ENCODE measurements at regions of chr10 and their contacts with region 1.

Region 1: GRCh38 chr10:99845837-99846382 is 63.5 kb downstream of the ABCC2 start:
- DNase-seq: peak; percentile 67 to 74 (median 71)
- H3K4me3 ChIP-seq: no peak overlapping the region
- H3K4me3 Mint-ChIP-seq: peak overlapping the region in 7 of 8 donors; percentile 10 to 70 (median 39)
- H3K27ac ChIP-seq: no peak overlapping the region
- H3K27ac Mint-ChIP-seq: no peak overlapping the region
- H3K4me1 ChIP-seq: peaks cover 4% of the 10 kb centered on the region
- H3K4me1 Mint-ChIP-seq: peaks cover 4 to 7% (median 5%) of the 10 kb centered on the region in 4 donors
- H3K27me3 ChIP-seq: no peaks in the 10 kb centered on the region
- H3K27me3 Mint-ChIP-seq: no peaks in the 10 kb centered on the region

Region 2: DNA sequence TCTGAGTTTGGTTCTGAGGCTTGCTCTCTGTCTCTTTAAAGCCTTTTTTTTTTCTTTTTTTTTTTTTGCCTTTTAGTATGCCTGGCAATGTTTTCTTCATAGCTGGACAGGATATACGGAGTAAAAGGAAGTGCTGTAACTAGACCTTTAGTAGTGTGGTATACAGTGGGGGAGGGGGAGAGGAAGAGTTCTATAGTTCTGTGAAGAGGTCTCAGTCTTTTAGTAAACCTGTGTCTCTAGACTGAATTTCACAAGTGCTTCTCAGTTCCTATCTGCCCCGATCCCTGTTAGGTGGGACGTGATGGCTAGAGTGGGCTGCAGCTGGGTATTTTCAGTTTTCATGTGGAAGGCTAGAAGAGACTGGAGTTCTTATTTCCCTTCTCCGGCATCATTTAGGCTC is 66.6 kb before region 1 on chr10:
- CTCF ChIA-PET with region 1: no interaction called
- POLR2A ChIA-PET with region 1: no interaction called
- intact Hi-C with region 1: no loop called
- DNase-seq: no peak
- H3K4me3 ChIP-seq: no peak overlapping the region
- H3K4me3 Mint-ChIP-seq: no peak overlapping the region
- H3K27ac ChIP-seq: no peak overlapping the region
- H3K27ac Mint-ChIP-seq: no peak overlapping the region
- H3K4me1 ChIP-seq: no peaks in the 10 kb centered on the region
- H3K4me1 Mint-ChIP-seq: no peaks in the 10 kb centered on the region
- H3K27me3 ChIP-seq: no peaks in the 10 kb centered on the region
- H3K27me3 Mint-ChIP-seq: peaks cover 0 to 5% of the 10 kb centered on the region in 2 donors

Region 3: GRCh38 chr10:99827936-99828335 is 18.0 kb before region 1 on chr10:
- CTCF ChIA-PET with region 1: interaction called, 10 read pairs
- POLR2A ChIA-PET with region 1: no interaction called
- intact Hi-C with region 1: no loop called
- DNase-seq: no peak
- H3K4me3 ChIP-seq: no peak overlapping the region
- H3K4me3 Mint-ChIP-seq: peak overlapping the region in 3 of 8 donors; percentile 13 to 27 (median 23)
- H3K27ac ChIP-seq: no peak overlapping the region
- H3K27ac Mint-ChIP-seq: peak overlapping the region in 2 of 7 donors; percentile 38 to 55
- H3K4me1 ChIP-seq: no peaks in the 10 kb centered on the region
- H3K4me1 Mint-ChIP-seq: peaks cover 8 to 12% (median 10%) of the 10 kb centered on the region in 4 donors
- H3K27me3 ChIP-seq: no peaks in the 10 kb centered on the region
- H3K27me3 Mint-ChIP-seq: no peaks in the 10 kb centered on the region

Region 4: DNA sequence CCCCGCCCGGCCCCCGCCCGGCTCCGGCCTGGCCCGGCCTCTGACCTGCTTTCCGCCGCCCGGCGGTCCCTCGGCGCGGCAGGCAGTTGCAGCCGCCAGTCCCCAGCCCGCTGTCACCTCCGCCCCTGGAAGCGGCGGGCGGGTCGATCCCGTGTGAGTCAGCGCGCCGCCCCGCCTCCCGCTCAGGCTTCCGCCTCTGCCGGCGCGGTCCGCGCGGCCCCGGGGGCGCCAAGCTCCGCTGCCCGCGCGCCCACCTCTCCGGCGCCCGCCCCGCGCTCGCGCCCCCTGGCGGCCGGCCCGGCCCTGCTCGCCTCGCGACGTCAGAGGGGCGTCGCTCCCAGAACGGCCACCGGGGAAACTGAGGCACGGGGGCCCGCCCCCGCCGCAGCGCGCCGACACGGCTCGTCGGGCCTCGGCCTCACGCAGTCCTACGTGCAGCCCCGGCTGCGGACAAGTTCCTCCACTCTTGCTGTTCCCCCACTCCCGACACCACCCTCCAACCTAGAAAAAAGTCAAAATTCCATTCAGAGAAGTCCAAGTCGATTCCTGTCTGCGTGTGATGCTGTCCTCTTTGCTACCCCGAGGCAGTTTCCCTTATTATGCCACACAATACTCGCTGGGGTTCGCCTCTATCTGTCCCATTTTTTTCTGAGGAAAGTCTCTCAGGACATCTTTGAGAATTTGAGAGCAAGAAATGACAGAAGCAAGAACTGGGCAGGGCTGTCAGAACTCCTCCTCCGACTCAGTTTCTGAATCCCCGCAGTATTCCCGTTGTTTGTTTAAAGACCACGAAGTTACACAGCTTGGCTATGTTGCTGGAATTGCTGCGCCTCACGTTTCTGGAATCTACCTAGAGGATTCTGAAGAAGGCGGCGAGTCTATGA is 164.1 kb after region 1 on chr10 and contains the start of gene DNMBP:
- CTCF ChIA-PET with region 1: interaction called, 62 read pairs
- POLR2A ChIA-PET with region 1: interaction called, 9 read pairs
- intact Hi-C with region 1: loop called (anchors 1 kb)
- DNase-seq: peak; percentile 75 to 81 (median 79)
- H3K4me3 ChIP-seq: peak within 1 kb of the TSS; percentile 65 to 89
- H3K4me3 Mint-ChIP-seq: peak within 1 kb of the TSS; percentile 89 to 97 (median 95)
- H3K27ac ChIP-seq: peak within 1 kb of the TSS; percentile 34
- H3K27ac Mint-ChIP-seq: peak within 1 kb of the TSS; percentile 76 to 93 (median 90)
- H3K4me1 ChIP-seq: peaks cover 19% of the 10 kb centered on the region
- H3K4me1 Mint-ChIP-seq: peaks cover 22 to 48% (median 31%) of the 10 kb centered on the region in 4 donors
- H3K27me3 ChIP-seq: no peaks in the 10 kb centered on the region
- H3K27me3 Mint-ChIP-seq: peaks cover 0 to 3% of the 10 kb centered on the region in 2 donors
- total RNA-seq, gene DNMBP: 3.8 to 4.0 TPM

Region 5: DNA sequence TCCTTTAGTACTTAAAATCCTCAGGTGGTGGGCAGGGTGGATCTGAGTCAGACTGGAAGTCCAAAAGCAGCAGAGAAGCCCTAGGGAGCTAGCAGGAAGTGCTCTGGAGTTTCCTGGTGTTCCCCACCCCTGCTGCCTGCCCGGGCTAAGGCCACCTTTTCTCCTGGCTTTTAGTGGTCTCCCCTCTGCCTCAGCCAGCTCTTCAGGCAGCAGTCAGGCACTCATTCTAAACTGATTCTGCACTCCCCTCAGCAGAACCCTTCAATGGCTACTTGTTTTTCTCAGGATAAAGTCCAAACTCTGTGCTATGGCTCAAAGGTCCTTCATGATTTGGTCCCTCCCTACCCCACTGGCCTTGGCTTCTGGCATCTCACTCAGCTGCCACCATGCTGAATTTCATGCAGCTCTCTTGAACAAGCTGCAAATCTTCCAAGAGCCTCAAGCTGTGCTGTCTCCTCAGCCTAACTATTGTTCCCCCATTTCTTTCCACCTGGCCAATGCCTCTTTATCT is 192.7 kb after region 1 on chr10:
- CTCF ChIA-PET with region 1: interaction called, 336 read pairs
- POLR2A ChIA-PET with region 1: no interaction called
- intact Hi-C with region 1: no loop called
- DNase-seq: no peak
- H3K4me3 ChIP-seq: no peak overlapping the region
- H3K4me3 Mint-ChIP-seq: no peak overlapping the region
- H3K27ac ChIP-seq: no peak overlapping the region
- H3K27ac Mint-ChIP-seq: no peak overlapping the region
- H3K4me1 ChIP-seq: no peaks in the 10 kb centered on the region
- H3K4me1 Mint-ChIP-seq: no peaks in the 10 kb centered on the region
- H3K27me3 ChIP-seq: no peaks in the 10 kb centered on the region
- H3K27me3 Mint-ChIP-seq: peaks cover 6 to 25% of the 10 kb centered on the region in 2 donors

Region 6: DNA sequence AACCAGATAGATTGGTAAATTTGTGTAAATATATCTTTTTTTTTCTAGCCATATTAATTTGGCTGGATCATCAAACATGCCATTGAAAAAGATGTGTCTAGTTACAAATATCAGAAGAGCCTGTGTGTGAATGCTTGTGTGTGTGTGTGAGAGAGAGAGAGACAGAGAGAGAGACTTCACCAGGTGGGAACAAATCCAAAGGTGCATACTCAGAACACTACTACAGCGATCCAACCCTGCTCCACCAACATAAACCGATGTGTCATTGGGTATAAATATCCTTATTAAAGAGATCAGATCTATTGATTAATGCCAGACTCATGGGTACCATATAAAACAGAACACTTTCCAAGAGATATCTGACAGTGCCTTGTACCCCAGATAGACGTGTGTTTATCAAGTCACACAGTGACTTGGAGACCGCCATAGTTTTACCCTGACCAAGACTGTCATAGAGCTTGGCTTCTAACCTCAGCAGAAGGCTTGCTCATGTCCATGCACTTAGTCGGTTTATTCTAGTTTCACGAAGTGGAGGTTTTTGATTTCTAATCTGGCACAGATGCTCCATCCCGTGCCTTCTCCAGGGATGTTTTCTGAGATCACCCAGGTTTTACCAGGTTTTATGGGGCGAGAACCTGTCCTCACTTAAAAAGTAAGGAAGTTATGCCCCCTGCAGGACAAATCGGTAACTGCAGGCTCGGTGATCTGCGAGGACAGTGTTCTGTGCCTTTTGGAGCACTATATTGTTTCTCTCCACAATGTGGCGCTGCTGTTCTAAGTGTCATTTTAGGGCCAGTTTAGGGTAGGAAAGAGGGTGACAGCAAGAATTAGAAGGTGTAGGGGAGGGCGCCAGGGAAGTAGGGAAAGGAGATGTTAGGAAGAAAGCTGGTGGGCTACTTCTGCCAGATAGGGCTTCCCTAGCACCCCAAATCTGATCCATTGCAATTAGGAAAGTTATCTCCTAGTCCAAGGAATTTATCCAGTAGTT is 587.6 kb after region 1 on chr10:
- CTCF ChIA-PET with region 1: interaction called, 3 read pairs
- POLR2A ChIA-PET with region 1: no interaction called
- intact Hi-C with region 1: loop called (anchors 5 kb)
- DNase-seq: peak; percentile 87 to 93 (median 90)
- H3K4me3 ChIP-seq: no peak overlapping the region
- H3K4me3 Mint-ChIP-seq: peak overlapping the region in 1 of 8 donors; percentile 4
- H3K27ac ChIP-seq: no peak overlapping the region
- H3K27ac Mint-ChIP-seq: peak overlapping the region in 2 of 7 donors; percentile 11 to 14
- H3K4me1 ChIP-seq: no peaks in the 10 kb centered on the region
- H3K4me1 Mint-ChIP-seq: peaks cover 0 to 3% (median 1%) of the 10 kb centered on the region in 4 donors
- H3K27me3 ChIP-seq: no peaks in the 10 kb centered on the region
- H3K27me3 Mint-ChIP-seq: peaks cover 2% of the 10 kb centered on the region in 2 donors